ENCODE measurements at regions of chr20 and their contacts with region 1.

Region 1: GRCh38 chr20:33299111-33299603 is 16.1 kb downstream of the BPIFB1 start:
- DNase-seq: peak; percentile 92
- H3K4me3 Mint-ChIP-seq: no peak overlapping the region
- H3K27ac Mint-ChIP-seq: no peak overlapping the region
- H3K4me1 Mint-ChIP-seq: peaks cover 2% of the 10 kb centered on the region
- H3K27me3 Mint-ChIP-seq: peaks cover 13% of the 10 kb centered on the region

Region 2: GRCh38 chr20:32600681-32601237 is 698.4 kb before region 1 on chr20:
- intact Hi-C with region 1: no loop called
- DNase-seq: no peak
- H3K4me3 Mint-ChIP-seq: no peak overlapping the region
- H3K27ac Mint-ChIP-seq: no peak overlapping the region
- H3K4me1 Mint-ChIP-seq: peaks cover 4% of the 10 kb centered on the region
- H3K27me3 Mint-ChIP-seq: peaks cover 2% of the 10 kb centered on the region

Region 3: DNA sequence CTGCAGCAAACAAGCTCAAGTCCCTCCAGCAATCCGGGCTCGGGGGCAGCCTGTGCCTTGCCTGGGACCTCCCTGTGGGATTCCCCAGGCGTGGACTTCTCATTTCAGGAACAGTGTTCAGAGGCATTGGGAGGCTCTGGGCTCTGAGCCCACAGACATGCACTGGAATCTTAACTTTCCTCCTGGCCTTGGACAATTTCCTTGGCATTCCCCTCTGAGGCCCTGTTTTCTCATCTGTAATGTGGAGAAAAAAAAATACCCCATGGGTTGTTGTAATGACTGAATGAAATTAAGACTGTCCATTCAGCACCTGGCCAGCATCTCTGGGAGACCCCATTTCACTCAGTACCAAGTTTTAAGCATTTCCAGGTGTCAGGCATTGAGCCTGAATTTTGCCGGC is 202.2 kb before region 1 on chr20:
- intact Hi-C with region 1: loop called (anchors 5 kb)
- DNase-seq: no peak
- H3K4me3 Mint-ChIP-seq: no peak overlapping the region
- H3K27ac Mint-ChIP-seq: no peak overlapping the region
- H3K4me1 Mint-ChIP-seq: no peaks in the 10 kb centered on the region
- H3K27me3 Mint-ChIP-seq: no peaks in the 10 kb centered on the region

Measured in activated CD4-positive, alpha-beta T cell treated with anti-CD3 and anti-CD28 coated beads, Interleukin-2, amount 10 ng/mL, durations not matched to agents 24 days and 14 days (primary cell).